HEK293T (cell line): ENCODE measurements at regions of chr17 and their contacts with region 1.

Region 1: DNA sequence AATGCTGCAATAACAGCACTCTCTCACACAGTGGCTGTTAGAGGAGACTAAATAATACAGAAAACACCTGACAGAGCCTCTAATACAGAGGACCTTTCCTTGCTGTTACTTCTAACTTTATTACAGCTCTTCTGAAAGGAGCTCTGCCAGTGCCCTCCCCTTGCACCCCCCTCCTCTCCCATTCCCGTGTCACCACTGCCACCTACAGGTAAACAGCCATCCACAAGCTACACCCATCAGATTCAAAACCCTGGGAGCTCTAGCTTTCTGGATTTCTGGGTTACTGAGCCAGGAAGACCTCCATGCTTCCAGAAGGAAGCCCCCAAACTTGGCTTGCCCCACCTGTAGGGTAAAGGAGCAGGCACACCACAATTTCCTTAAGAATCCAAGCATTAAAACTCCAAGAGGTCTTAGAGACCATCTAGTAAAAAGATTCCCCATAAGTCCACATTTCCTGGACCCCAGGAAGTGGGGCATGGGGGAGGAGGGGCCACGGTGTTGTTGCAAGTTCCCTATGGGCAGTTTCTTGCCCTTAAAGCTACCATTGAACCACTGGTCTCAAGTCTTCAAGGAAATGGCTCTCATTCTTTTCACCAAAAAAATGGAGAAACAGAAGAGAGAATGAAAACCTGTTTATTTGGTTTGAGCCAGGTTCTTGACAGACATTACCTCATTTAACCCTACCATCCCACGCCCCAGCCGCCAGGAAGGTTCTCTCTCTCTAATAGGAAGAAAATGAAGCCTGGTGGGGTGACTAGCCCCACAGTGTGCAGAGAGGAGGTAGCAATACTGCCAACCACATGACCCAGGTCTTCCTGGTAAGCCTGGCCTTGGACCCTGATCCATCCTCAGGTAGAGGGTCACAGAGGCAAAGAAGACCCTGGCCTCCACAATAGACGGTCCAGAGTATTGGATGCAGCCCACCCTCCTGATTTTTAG is 52.8 kb downstream of the TOM1L2 start:
- DNase-seq: peak; percentile 75

Region 2: DNA sequence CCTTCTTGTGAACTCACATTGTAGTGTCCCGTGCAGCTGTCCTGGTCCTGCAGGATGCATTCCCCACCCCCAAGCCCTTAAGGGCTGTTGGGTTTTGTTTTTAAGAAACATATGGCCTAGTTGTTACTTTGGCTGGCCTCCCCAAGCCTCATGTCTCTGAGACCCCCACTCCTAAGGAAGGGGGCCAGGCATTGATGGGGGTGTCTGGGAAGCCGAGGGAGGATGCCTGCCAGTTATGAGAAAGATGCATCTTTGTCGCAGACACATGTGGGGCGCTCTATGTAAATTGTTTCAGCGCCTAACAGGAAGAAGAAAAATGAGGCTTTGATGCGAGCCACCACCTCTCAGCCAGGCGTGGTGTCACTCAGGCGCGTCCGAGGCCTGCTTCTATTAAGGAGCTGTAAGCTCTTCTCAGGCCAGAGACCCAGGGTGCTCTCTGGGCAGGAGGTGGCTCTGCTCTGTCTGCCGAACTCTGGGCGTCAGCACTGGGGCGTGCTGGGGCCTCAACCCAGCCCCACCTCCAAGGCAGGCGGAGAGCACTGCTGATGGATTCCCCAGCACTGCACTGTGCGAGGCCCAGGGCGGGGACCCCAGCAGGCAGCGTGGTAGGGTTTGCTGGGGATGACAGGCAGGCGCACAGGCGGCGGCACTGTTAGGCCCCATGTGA is 153.2 kb before region 1 on chr17:
- CTCF ChIA-PET with region 1: no interaction called
- POLR2A ChIA-PET with region 1: no interaction called
- DNase-seq: no peak

Region 3: GRCh38 chr17:17859909-17860765 is 59.3 kb before region 1 on chr17:
- CTCF ChIA-PET with region 1: interaction called, 10 read pairs
- POLR2A ChIA-PET with region 1: no interaction called
- DNase-seq: peak; percentile 82

Region 4: GRCh38 chr17:17866897-17867296 is 52.5 kb before region 1 on chr17:
- CTCF ChIA-PET with region 1: interaction called, 11 read pairs
- POLR2A ChIA-PET with region 1: no interaction called
- DNase-seq: no peak

Region 5: DNA sequence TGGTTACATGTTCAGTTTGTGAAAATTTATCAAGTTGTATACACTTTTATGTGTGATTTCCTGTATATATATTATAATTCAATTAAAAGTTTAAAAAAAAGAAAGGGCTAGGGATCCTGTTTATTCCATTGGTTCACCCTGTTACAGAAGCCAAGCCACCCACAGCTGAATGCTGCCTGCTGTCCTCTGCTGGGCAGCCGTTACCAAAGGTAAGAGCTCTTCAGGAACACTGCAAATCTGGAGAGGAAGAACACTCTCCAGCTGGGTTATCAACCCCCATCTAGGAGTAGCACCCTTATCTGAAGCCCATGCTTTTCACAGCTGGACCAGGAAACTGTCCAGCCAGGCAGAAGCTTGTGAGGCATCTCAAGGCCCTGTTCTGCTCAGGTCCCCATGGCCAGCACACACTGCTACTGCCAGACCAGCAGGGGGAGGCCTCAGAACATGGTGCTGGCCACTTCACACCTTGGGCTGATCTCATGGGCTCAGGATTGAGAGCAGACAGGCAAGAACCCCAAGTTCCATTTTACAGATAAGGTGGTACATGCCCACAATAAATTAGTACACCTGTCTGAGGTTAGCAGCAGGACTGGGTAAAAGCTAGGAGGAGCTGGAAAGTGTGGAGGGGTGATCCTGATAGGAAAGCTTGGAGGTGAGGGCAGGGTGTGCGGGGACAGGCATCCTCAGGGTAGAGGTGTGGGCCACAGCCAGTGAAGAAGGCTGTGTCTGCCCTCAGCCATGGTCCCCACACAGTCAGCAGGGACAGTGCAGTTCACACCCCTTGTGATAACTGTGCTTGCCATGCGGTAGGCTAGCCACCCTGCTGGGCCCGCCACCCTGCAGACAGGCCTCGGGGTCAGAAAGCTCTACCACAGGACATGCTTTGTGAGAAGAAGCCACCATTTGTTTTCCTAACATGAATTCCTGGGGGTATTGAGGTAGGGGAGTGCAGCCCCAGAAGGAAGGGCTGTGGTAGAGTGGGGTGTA is 28.4 kb before region 1 on chr17:
- CTCF ChIA-PET with region 1: interaction called, 55 read pairs
- POLR2A ChIA-PET with region 1: interaction called, 7 read pairs
- DNase-seq: peak; percentile 67

Region 6: GRCh38 chr17:17900615-17901520 is 18.6 kb before region 1 on chr17:
- CTCF ChIA-PET with region 1: interaction called, 16 read pairs
- POLR2A ChIA-PET with region 1: interaction called, 3 read pairs
- DNase-seq: no peak